Activated CD8-positive, alpha-beta T cell treated with anti-CD3 and anti-CD28 coated beads, Interleukin-2, amount 10 ng/mL, durations not matched to agents 7 days and 5 days (primary cell): ENCODE measurements at regions of chr10 and their contacts with region 1.

Region 1: DNA sequence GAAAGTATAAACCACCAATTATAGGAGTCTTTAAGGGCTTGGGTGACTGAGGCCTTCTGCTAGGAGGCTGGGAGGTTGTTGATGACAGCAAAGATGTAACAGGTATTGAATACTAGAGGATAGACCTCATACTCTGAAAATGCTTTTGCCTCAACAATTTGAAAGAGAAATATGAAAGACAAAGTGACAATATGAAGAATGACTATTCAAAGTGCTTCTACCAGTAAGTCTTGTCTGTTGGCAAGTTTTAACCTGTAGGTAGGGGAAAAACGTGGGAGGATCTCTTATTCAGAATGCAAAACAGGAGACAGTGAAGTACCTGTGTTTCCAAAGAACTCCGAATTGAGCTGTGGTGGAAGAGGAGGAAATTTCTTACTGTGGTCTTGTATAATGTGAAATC is 38.2 kb downstream of the GBF1 start:
- DNase-seq: no peak
- ATAC-seq: peak; percentile 15
- H3K4me3 Mint-ChIP-seq: peak overlapping the region; percentile 27
- H3K27ac Mint-ChIP-seq: peak overlapping the region; percentile 73
- H3K4me1 Mint-ChIP-seq: peaks cover 73% of the 10 kb centered on the region
- H3K27me3 Mint-ChIP-seq: no peaks in the 10 kb centered on the region

Region 2: GRCh38 chr10:102231357-102232318 is 51.9 kb before region 1 on chr10:
- CTCF ChIA-PET with region 1: interaction called, 10 read pairs
- POLR2A ChIA-PET with region 1: no interaction called
- DNase-seq: peak; percentile 80
- ATAC-seq: peak; percentile 70
- H3K4me3 Mint-ChIP-seq: peak overlapping the region; percentile 63
- H3K27ac Mint-ChIP-seq: no peak overlapping the region
- H3K4me1 Mint-ChIP-seq: peaks cover 21% of the 10 kb centered on the region
- H3K27me3 Mint-ChIP-seq: peaks cover 63% of the 10 kb centered on the region

Region 3: GRCh38 chr10:102268375-102268888 is 15.1 kb before region 1 on chr10:
- CTCF ChIA-PET with region 1: interaction called, 10 read pairs
- POLR2A ChIA-PET with region 1: no interaction called
- DNase-seq: no peak
- ATAC-seq: peak; percentile 39
- H3K4me3 Mint-ChIP-seq: no peak overlapping the region
- H3K27ac Mint-ChIP-seq: peak overlapping the region; percentile 19
- H3K4me1 Mint-ChIP-seq: peaks cover 44% of the 10 kb centered on the region
- H3K27me3 Mint-ChIP-seq: no peaks in the 10 kb centered on the region